GM12878 (cell line): ENCODE measurements at regions of chr10 and their contacts with region 1.

Region 1: GRCh38 chr10:113802997-113803396 is 50.9 kb downstream of the DCLRE1A start:
- DNase-seq: no peak
- ATAC-seq: peak; percentile 55; the same call in 2 of the 3 replicates
- H3K4me3 ChIP-seq: no peak overlapping the region
- H3K27ac ChIP-seq: no peak overlapping the region
- H3K4me1 ChIP-seq: peaks cover under 1% of the 10 kb centered on the region
- H3K27me3 ChIP-seq: no peaks in the 10 kb centered on the region; a peak in 1 of 4 replicates
- CTCF ChIP-seq: no peak
- EP300 ChIP-seq: no peak
- POLR2A ChIP-seq: no peak
- RAD21 ChIP-seq: no peak

Region 2: DNA sequence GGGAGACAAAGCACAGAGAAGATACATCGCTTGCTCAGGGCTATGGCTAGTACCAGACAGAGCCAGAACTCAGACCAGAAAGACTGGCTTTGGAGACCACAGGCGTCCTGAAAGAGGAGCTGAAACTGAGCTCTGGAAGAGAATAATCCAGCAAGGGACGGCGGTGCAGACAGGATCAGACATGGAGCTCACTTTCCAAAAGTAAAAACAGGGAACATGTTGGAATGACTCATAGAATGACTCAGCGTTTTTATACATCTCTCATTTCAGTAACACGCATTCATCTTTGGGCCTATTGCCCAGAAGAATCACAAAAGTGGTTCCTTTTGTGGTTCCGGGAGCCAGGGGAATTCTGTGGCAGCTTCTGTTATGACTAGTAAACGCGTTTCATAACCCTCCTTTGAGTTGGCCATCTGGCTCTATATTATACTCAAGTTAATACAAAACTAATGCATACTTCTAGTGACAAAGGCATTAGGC is 14.4 kb before region 1 on chr10:
- CTCF ChIA-PET with region 1: interaction called, 17 read pairs
- POLR2A ChIA-PET with region 1: no interaction called
- RAD21 ChIA-PET with region 1: interaction called, 10 read pairs
- SMC1A ChIA-PET with region 1: interaction called, 8 read pairs
- in situ Hi-C with region 1: no loop called
- intact Hi-C with region 1: no loop called
- DNase-seq: peak; percentile 62
- ATAC-seq: peak; percentile 93
- H3K4me3 ChIP-seq: no peak overlapping the region
- H3K27ac ChIP-seq: no peak overlapping the region; the same call in 1 of the 2 replicates
- H3K4me1 ChIP-seq: peaks cover 6% of the 10 kb centered on the region; the same call in 1 of the 2 replicates
- H3K27me3 ChIP-seq: no peaks in the 10 kb centered on the region
- CTCF ChIP-seq: no peak
- EP300 ChIP-seq: peak; percentile 84 to 93
- POLR2A ChIP-seq: no peak
- RAD21 ChIP-seq: no peak

Region 3: DNA sequence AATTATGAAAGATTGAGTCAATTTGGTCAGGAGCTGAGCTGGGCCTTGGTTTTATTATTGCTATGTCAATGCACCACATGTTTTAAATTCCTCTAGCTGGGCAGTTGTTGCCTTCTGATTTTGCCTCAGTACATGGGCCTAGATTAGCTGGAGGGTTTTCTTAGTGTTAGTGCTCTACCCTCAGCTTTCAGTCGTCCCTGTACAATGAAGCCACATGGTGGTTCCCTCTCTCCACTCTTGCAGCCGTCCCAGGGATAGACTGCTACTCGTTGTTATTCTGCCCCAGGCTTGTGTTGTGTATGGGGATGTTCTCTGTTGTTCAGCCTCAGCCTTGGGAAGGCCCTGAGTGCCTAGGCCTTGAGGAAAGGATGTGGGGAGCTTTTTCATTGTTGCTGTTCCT is 88.5 kb after region 1 on chr10:
- CTCF ChIA-PET with region 1: interaction called, 11 read pairs
- POLR2A ChIA-PET with region 1: no interaction called
- RAD21 ChIA-PET with region 1: no interaction called
- SMC1A ChIA-PET with region 1: interaction called, 5 read pairs
- in situ Hi-C with region 1: no loop called
- intact Hi-C with region 1: no loop called
- DNase-seq: no peak
- ATAC-seq: peak; percentile 28; the same call in 1 of the 3 replicates
- H3K4me3 ChIP-seq: no peak overlapping the region
- H3K27ac ChIP-seq: no peak overlapping the region
- H3K4me1 ChIP-seq: no peaks in the 10 kb centered on the region
- H3K27me3 ChIP-seq: no peaks in the 10 kb centered on the region
- CTCF ChIP-seq: no peak
- EP300 ChIP-seq: no peak
- POLR2A ChIP-seq: no peak
- RAD21 ChIP-seq: peak; percentile 21; the same call in 1 of the 2 replicates

Region 4: DNA sequence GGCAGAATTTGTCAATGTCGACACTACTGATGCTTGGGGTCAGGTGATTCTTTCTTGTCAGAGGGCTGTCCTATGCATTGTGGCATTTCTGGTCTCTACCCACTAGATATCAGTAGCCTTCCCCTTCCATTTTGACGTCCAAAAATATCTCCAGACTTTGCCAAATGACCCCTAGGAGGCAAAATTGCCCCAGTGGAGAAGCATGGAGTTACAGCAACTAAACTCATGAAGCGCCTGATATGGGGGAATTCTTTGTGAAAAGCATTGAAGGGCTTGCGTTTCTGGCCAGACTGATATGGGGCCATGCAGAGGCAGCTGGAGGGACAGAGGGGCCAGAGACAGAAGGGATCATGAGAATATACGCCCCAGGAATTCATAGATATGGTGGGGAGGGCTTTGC is 284.3 kb after region 1 on chr10:
- CTCF ChIA-PET with region 1: interaction called, 6 read pairs
- POLR2A ChIA-PET with region 1: no interaction called
- RAD21 ChIA-PET with region 1: interaction called, 4 read pairs
- SMC1A ChIA-PET with region 1: interaction called, 11 read pairs
- in situ Hi-C with region 1: no loop called
- intact Hi-C with region 1: no loop called
- DNase-seq: no peak
- ATAC-seq: peak; percentile 26; the same call in 1 of the 3 replicates
- H3K4me3 ChIP-seq: no peak overlapping the region
- H3K27ac ChIP-seq: no peak overlapping the region
- H3K4me1 ChIP-seq: no peaks in the 10 kb centered on the region
- H3K27me3 ChIP-seq: no peaks in the 10 kb centered on the region
- CTCF ChIP-seq: peak in 2 of 3 experiments; percentile 14 to 27; a peak in 2 of 6 replicates
- EP300 ChIP-seq: no peak
- POLR2A ChIP-seq: no peak
- RAD21 ChIP-seq: 0 out of 2 replicates have a peak, but pooled peaks have one; percentile 13

Region 5: GRCh38 chr10:114103284-114103683 is 300.3 kb after region 1 on chr10:
- CTCF ChIA-PET with region 1: interaction called, 295 read pairs
- POLR2A ChIA-PET with region 1: no interaction called
- RAD21 ChIA-PET with region 1: interaction called, 157 read pairs
- SMC1A ChIA-PET with region 1: interaction called, 291 read pairs
- in situ Hi-C with region 1: loop called (anchors 5 kb)
- intact Hi-C with region 1: loop called (anchors 1 kb)
- DNase-seq: peak; percentile 23
- ATAC-seq: peak; percentile 68
- H3K4me3 ChIP-seq: no peak overlapping the region
- H3K27ac ChIP-seq: no peak overlapping the region
- H3K4me1 ChIP-seq: peaks cover 28% of the 10 kb centered on the region
- H3K27me3 ChIP-seq: no peaks in the 10 kb centered on the region; a peak in 2 of 4 replicates
- CTCF ChIP-seq: peak; percentile 39 to 79 (median 60); a peak in 5 of 6 replicates
- EP300 ChIP-seq: no peak
- POLR2A ChIP-seq: no peak
- RAD21 ChIP-seq: peak; percentile 91